GM13977 (cell line): ENCODE measurements at regions of chrX and their contacts with region 1.

Region 1: DNA sequence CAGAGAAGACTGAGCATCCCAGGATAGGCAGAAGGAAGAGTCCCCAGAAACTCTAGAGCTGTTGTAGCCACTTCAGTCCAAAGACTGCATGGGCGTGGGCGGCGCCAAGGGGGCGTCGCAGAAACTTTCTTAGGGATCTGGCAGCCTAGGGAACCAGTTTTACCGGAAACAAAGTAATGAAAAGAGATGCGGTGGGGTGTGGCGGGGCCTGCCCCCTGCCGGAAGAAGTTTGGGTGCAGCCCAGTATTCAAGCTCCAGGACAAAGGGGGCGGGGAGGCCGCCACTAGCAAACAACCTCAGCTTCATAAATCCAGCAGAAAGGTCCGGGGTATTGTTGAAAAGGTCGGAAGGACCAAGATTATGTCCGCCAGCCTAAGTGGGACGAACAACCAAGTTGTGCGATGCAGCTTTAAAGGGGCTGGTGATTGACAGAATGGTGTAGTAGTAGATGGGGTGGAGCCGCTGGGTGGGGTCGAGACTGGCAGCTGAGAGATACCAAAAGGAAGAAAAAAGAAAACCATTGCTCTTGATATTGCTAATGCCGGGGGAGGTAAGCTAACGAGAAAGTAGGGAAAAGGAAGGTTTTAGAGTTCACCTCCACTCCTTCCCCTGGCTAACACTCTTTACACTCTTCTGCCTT is 190.5 kb downstream of the RRAGB start:
- DNase-seq: peak; percentile 25
- CTCF ChIP-seq: peak; percentile 46

Region 2: GRCh38 chrX:55731826-55732225 is 176.3 kb before region 1 on chrX:
- in situ Hi-C with region 1: loop called (anchors 25 kb)
- DNase-seq: no peak
- CTCF ChIP-seq: no peak

Region 3: DNA sequence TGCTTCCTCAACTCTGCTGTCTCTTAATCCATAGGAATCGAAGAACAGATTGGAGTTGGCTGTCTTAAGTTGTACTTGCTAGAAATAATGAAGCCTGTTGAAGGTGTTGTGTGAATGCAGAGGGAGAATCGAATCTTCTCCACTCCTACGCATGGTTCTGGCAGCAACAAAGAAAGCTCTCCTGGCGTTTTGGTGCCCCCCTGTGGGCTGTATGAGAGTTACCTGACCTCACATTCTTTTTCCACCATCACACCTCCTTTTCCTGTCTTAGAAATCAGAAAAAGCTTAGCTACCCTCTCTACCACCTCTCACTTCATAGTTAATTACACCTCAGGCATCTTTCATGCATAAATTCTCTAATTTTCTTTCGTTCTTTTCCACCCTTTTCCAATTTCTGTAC is 340.4 kb after region 1 on chrX:
- in situ Hi-C with region 1: loop called (anchors 25 kb)
- DNase-seq: peak; percentile 52
- CTCF ChIP-seq: peak; percentile 70